Common myeloid progenitor, CD34-positive (primary cell): ENCODE measurements at regions of chr5 and their contacts with region 1.

Region 1: GRCh38 chr5:67246108-67246507 is 49.5 kb upstream of the CD180 start:
- DNase-seq: peak; percentile 83 to 91 (median 86)
- H3K4me3 ChIP-seq: no peak overlapping the region
- H3K27ac ChIP-seq: no peak overlapping the region
- H3K4me1 ChIP-seq: peaks cover 5 to 19% (median 12%) of the 10 kb centered on the region in 4 experiments
- H3K27me3 ChIP-seq: no peaks in the 10 kb centered on the region

Region 2: DNA sequence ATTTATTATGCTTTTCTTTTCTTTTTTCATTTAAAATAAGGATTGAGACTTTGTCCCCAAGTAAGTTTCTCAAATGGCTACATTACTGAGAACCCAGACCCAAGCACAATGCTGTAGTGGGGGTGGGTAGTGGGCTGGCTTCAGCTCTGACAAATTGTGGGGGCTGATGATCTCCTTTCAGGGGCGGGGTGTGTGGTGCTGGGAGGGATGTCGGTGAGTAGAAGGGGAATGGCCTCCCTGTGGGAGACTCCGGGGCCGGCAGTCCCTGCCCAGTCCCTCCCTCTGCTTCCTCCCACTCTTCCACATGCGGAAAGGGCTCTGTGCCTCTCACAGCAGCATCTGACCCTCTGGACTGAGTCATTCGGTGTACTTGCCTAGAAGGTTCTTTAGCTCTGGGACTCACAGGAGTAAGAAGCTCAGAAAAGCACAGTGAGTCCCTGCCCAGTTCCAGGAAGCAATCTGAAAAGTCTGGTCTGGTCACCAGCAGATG is 63.8 kb before region 1 on chr5:
- CTCF ChIA-PET with region 1: no interaction called
- POLR2A ChIA-PET with region 1: no interaction called
- DNase-seq: peak in 1 of 3 donors; percentile 31
- H3K4me3 ChIP-seq: peak overlapping the region in 1 of 7 experiments; percentile 4
- H3K27ac ChIP-seq: no peak overlapping the region
- H3K4me1 ChIP-seq: peaks cover 11 to 33% (median 18%) of the 10 kb centered on the region in 4 experiments
- H3K27me3 ChIP-seq: no peaks in the 10 kb centered on the region

Region 3: DNA sequence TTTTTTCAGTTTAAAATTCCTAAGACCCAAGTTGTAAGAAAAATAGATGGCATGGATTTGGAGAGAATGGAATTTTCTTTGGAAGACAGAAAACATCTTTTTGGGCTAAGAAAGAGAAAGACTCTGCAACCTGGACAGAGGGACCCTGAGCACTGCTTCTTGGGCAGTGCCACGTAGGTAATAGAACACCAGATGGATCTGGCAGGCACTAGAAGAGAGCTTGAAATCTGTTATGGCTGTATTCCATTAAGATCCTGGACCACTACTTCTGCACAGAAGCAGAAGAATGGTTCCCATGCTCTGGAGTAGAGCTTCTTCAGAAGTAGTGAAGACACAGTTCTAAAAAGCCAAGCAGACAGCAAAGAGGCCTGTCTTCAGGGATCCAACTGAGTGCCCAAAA is 256.8 kb after region 1 on chr5:
- CTCF ChIA-PET with region 1: no interaction called
- POLR2A ChIA-PET with region 1: no interaction called
- DNase-seq: no peak
- H3K4me3 ChIP-seq: no peak overlapping the region
- H3K27ac ChIP-seq: no peak overlapping the region
- H3K4me1 ChIP-seq: no peaks in the 10 kb centered on the region
- H3K27me3 ChIP-seq: no peaks in the 10 kb centered on the region

Region 4: GRCh38 chr5:68260467-68260866 is 1014.4 kb after region 1 on chr5:
- CTCF ChIA-PET with region 1: interaction called, 49 read pairs
- POLR2A ChIA-PET with region 1: no interaction called
- DNase-seq: peak in 1 of 3 donors; percentile 57
- H3K4me3 ChIP-seq: no peak overlapping the region
- H3K27ac ChIP-seq: no peak overlapping the region
- H3K4me1 ChIP-seq: peaks cover 25 to 87% (median 68%) of the 10 kb centered on the region in 4 experiments
- H3K27me3 ChIP-seq: no peaks in the 10 kb centered on the region